ENCODE measurements at regions of chr20 and their contacts with region 1.

Region 1: DNA sequence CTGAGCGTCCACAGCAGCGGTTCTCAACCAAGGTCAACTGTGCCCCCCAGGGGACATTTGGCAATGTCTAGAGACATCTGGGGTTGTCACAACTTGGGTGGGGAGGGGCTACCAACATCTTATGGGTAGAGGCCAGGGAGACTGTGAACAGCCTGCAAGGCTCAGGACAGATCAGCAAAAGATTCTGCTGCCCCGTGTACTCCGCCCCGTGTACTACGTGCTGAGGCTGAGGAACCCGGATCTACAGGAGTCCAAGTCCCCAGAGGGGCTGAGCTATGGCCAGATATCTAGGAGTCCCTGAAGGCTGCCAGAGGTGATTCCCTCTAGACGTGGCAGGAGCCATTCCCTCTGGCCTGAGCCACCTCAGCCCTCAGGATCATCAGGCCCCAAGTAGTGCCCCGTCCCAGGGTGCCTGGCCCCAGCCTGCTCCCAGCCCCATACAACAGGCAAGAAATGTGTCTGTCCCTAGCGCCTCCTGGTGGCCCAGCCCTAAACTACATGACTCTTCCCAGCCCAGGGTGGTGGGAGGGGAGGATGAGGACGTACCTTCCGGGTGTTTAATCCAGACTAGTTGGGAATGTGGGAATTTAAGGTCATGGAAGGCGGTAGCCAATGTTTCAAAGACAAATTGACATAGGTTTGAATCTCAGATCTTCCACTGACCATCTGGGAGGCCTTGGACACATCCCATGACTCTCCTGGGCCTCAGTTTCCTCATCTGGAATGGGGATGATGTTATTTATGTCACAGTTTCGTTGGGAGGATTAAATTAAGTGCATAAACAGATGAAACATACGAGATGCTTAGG is 49.5 kb upstream of the PTPN1 start:
- DNase-seq: peak; percentile 91
- ATAC-seq: peak; percentile 90
- H3K4me3 Mint-ChIP-seq: no peak overlapping the region
- H3K27ac Mint-ChIP-seq: no peak overlapping the region
- H3K4me1 Mint-ChIP-seq: peaks cover 8% of the 10 kb centered on the region
- H3K27me3 Mint-ChIP-seq: peaks cover 6% of the 10 kb centered on the region

Region 2: DNA sequence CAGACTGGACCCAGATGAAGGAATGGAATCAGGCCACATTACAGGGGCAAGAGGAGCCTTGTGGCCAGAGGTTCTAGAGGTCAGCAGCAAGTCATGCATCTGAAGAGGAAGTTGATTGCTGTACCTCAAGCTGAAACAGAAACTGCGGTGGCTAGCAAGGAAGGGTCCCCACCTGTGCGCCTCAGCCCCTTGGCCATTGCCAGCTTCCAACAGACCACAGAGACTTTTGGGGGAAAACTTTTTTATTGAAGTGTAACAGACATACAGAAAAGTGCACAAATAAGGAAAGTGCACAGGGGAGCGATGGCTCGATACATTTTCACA is 674.9 kb before region 1 on chr20:
- CTCF ChIA-PET with region 1: no interaction called
- POLR2A ChIA-PET with region 1: no interaction called
- intact Hi-C with region 1: no loop called
- DNase-seq: no peak
- ATAC-seq: no peak
- H3K4me3 Mint-ChIP-seq: no peak overlapping the region
- H3K27ac Mint-ChIP-seq: no peak overlapping the region
- H3K4me1 Mint-ChIP-seq: peaks cover 8% of the 10 kb centered on the region
- H3K27me3 Mint-ChIP-seq: peaks cover 14% of the 10 kb centered on the region

Region 3: GRCh38 chr20:50120897-50121693 is 339.6 kb before region 1 on chr20:
- CTCF ChIA-PET with region 1: interaction called, 3 read pairs
- POLR2A ChIA-PET with region 1: no interaction called
- intact Hi-C with region 1: loop called in 1 of 2 experiments (anchors 5 kb)
- DNase-seq: peak; percentile 79
- ATAC-seq: peak; percentile 74
- H3K4me3 Mint-ChIP-seq: no peak overlapping the region
- H3K27ac Mint-ChIP-seq: no peak overlapping the region
- H3K4me1 Mint-ChIP-seq: peaks cover 4% of the 10 kb centered on the region
- H3K27me3 Mint-ChIP-seq: no peaks in the 10 kb centered on the region

Region 4: DNA sequence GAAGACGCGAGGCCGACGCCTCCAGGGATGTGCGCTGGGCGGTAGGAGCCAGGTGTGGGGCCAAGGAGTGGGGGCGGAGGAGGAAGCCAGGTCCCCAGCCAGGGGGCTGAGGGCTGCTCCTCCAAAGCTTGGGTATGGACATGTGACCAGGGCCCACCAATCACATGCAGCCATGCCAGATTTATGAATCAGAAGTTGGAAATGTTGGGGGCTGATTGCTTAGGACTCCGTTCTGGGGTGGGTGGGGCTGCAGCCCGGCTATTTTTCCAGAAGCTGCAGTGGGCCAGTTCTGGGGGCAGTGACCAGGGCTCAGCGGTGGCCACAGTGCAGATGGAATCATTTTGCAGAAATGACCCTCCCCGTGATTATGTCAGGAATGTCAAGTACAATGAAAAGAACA is 174.1 kb before region 1 on chr20:
- CTCF ChIA-PET with region 1: interaction called, 5 read pairs
- POLR2A ChIA-PET with region 1: no interaction called
- intact Hi-C with region 1: loop called in 1 of 2 experiments (anchors 2 kb)
- DNase-seq: peak; percentile 33
- ATAC-seq: peak; percentile 8
- H3K4me3 Mint-ChIP-seq: no peak overlapping the region
- H3K27ac Mint-ChIP-seq: no peak overlapping the region
- H3K4me1 Mint-ChIP-seq: peaks cover 22% of the 10 kb centered on the region
- H3K27me3 Mint-ChIP-seq: peaks cover 2% of the 10 kb centered on the region

Region 5: GRCh38 chr20:50350510-50351249 is 110.0 kb before region 1 on chr20:
- CTCF ChIA-PET with region 1: no interaction called
- POLR2A ChIA-PET with region 1: no interaction called
- intact Hi-C with region 1: no loop called
- DNase-seq: no peak
- ATAC-seq: no peak
- H3K4me3 Mint-ChIP-seq: no peak overlapping the region
- H3K27ac Mint-ChIP-seq: peak overlapping the region; percentile 39
- H3K4me1 Mint-ChIP-seq: peaks cover 57% of the 10 kb centered on the region
- H3K27me3 Mint-ChIP-seq: peaks cover 3% of the 10 kb centered on the region

Region 6: GRCh38 chr20:50575847-50576720 is 115.4 kb after region 1 on chr20:
- CTCF ChIA-PET with region 1: interaction called, 8 read pairs
- POLR2A ChIA-PET with region 1: no interaction called
- intact Hi-C with region 1: loop called in 1 of 2 experiments (anchors 5 kb)
- DNase-seq: peak; percentile 83
- ATAC-seq: peak; percentile 89
- H3K4me3 Mint-ChIP-seq: no peak overlapping the region
- H3K27ac Mint-ChIP-seq: peak overlapping the region; percentile 16
- H3K4me1 Mint-ChIP-seq: peaks cover 44% of the 10 kb centered on the region
- H3K27me3 Mint-ChIP-seq: no peaks in the 10 kb centered on the region

Region 7: GRCh38 chr20:50588034-50588611 is 127.5 kb after region 1 on chr20:
- CTCF ChIA-PET with region 1: interaction called, 12 read pairs
- POLR2A ChIA-PET with region 1: no interaction called
- intact Hi-C with region 1: no loop called
- DNase-seq: peak; percentile 89
- ATAC-seq: peak; percentile 75
- H3K4me3 Mint-ChIP-seq: no peak overlapping the region
- H3K27ac Mint-ChIP-seq: no peak overlapping the region
- H3K4me1 Mint-ChIP-seq: peaks cover 3% of the 10 kb centered on the region
- H3K27me3 Mint-ChIP-seq: no peaks in the 10 kb centered on the region

Measured in activated CD4-positive, alpha-beta T cell treated with anti-CD3 and anti-CD28 coated beads for 36 hours (primary cell).